ENCODE measurements at regions of chr2 and their contacts with region 1.

Region 1: GRCh38 chr2:229553091-229553490 is 161.3 kb downstream of the DNER start:
- DNase-seq: no peak
- H3K4me3 ChIP-seq: no peak overlapping the region
- H3K27ac ChIP-seq: no peak overlapping the region
- H3K4me1 ChIP-seq: no peaks in the 10 kb centered on the region
- H3K27me3 ChIP-seq: no peaks in the 10 kb centered on the region
- CTCF ChIP-seq: no peak
- POLR2A ChIP-seq: no peak

Region 2: GRCh38 chr2:229539628-229540027 is 13.5 kb before region 1 on chr2:
- intact Hi-C with region 1: loop called (anchors 2 kb)
- DNase-seq: no peak
- H3K4me3 ChIP-seq: no peak overlapping the region
- H3K27ac ChIP-seq: no peak overlapping the region
- H3K4me1 ChIP-seq: no peaks in the 10 kb centered on the region
- H3K27me3 ChIP-seq: no peaks in the 10 kb centered on the region
- CTCF ChIP-seq: no peak
- POLR2A ChIP-seq: no peak

Region 3: DNA sequence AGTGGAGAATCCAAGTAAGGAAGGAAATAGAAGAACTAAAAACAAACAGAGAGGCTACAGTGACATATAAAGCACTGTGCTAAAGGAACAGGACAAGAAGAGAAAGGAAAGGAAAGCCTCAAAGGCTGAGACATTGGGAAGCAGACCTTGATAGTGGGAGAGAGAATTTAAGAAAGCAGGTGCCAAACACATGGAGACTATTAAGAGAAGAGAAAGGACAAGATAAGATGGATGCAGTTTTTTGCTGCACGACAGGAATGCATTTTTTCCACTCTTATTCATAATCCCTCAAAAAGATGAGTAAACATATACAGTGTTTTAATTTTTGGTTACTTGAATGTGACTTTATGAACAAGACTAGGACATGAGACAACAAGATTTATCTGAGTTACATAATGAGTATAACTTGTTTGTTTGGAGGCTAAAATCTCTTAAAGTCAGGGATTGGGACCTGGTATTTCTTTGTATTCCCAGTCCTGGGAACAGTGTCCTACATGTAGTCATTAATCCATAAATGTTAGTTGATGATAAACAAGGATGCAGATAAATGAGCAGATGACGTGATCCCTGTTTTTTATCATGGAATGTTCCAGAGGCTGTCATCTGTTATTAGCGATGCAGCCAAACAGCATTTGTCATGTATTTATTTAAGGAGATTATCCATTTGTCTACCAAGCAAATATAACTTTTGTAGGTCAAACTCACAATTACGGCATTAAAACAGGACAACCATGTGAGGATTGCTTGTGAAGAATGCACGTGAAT is 19.6 kb after region 1 on chr2:
- intact Hi-C with region 1: loop called (anchors 1 kb)
- DNase-seq: no peak
- H3K4me3 ChIP-seq: no peak overlapping the region
- H3K27ac ChIP-seq: peak overlapping the region in 1 of 2 donors; percentile 43
- H3K4me1 ChIP-seq: no peaks in the 10 kb centered on the region
- H3K27me3 ChIP-seq: no peaks in the 10 kb centered on the region
- CTCF ChIP-seq: no peak
- POLR2A ChIP-seq: no peak